ENCODE measurements at regions of chr5 and their contacts with region 1.

Region 1: GRCh38 chr5:39424736-39425637 is at the start of gene DAB2:
- DNase-seq: peak; percentile 87 to 93 (median 90)
- ATAC-seq: peak; percentile 75 to 87 (median 84)
- H3K4me3 ChIP-seq: peak within 1 kb of the TSS; percentile 27 to 76 (median 66)
- H3K27ac ChIP-seq: peak within 1 kb of the TSS; percentile 67 to 91 (median 82)
- H3K4me1 ChIP-seq: peaks cover 0 to 55% (median 43%) of the 10 kb centered on the region in 12 donors
- H3K27me3 ChIP-seq: peaks cover 0 to 5% (median 0%) of the 10 kb centered on the region in 9 donors
- CTCF ChIP-seq: peak; percentile 31 to 81 (median 60)
- POLR2A ChIP-seq: peak in 1 of 2 donors; percentile 66
- total RNA-seq, gene DAB2: 17.6 to 157 (median 26.1) TPM

Region 2: DNA sequence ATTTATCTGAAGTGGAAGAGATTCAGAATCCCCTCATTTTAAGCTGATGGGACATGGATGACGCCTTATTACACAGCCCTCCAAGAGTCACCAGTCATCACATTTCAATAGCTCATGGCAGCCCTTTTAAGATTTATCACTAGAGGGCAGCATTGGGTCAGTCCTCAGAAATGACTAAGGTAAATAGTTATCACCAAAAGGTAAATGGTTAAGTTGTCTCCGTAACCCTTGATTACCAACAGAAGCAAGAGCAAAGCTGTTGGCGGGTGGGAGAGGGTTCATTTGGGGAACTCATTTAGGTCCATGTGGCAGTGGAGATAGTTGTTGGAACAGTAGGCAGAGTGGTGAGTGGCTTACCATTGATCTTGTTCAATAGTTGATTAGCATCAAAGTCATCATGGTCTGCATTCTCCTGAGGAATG is 48.7 kb before region 1 on chr5:
- intact Hi-C with region 1: loop called in 3 of 10 experiments (anchors 5 kb)
- DNase-seq: no peak
- ATAC-seq: peak in 3 of 4 donors; percentile 49 to 79 (median 58)
- H3K4me3 ChIP-seq: no peak overlapping the region
- H3K27ac ChIP-seq: no peak overlapping the region
- H3K4me1 ChIP-seq: peaks cover 0 to 9% (median 0%) of the 10 kb centered on the region in 12 donors
- H3K27me3 ChIP-seq: no peaks in the 10 kb centered on the region
- CTCF ChIP-seq: peak; percentile 60 to 87 (median 73)
- POLR2A ChIP-seq: no peak

Region 3: DNA sequence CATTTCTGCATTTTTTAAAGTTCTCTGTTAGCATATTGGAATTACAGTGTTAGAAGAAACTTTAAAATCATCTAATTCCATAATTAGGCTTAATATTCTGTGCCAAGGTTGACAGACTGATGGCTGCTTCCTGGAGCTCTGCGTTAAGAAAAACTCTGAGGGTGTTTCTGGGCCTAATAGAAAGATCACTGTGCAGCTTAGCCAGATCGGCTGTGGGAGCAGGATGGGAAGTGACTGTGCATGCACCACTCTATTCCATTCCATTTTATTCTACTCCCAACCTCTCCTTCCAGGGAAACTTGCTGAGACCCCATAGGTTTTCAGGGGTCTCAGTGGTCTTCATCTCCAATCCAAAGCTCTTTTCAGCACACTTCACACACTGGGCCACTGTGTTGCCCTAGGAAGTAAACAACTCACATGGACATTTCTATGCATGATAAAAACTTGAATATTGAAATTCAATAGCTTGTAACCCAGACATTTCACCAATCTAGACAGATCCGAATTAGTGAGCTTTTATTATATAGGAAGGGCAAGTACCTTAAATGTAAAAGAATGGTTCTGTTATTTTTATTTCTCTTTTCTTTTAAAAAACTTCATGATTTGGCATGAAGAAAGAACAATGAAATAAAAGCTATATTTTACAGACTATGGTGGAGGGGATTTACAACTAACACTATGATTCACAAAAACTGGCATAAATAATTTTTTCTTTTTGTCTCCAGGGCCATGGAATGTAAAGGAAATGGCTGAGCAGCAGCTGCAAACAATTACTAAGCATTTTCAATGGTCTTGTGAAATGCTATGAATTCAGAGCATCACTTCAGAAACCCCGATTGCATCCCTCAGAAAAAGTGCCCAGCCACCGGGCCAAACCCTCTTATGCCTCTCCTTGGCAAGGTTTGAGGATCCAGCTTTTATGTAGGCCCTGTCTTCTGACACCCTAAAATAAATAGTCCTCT is 51.2 kb after region 1 on chr5:
- intact Hi-C with region 1: no loop called
- DNase-seq: no peak
- ATAC-seq: no peak
- H3K4me3 ChIP-seq: no peak overlapping the region
- H3K27ac ChIP-seq: peak overlapping the region in 2 of 12 donors; percentile 10 to 25
- H3K4me1 ChIP-seq: peaks cover 0 to 24% (median 1%) of the 10 kb centered on the region in 12 donors
- H3K27me3 ChIP-seq: no peaks in the 10 kb centered on the region
- CTCF ChIP-seq: no peak
- POLR2A ChIP-seq: no peak

Region 4: GRCh38 chr5:39501397-39501796 is 76.4 kb after region 1 on chr5:
- intact Hi-C with region 1: loop called in 2 of 10 experiments (anchors 5 to 10 kb)
- DNase-seq: peak in 4 of 5 donors; percentile 48 to 71 (median 59)
- ATAC-seq: peak; percentile 51 to 83 (median 69)
- H3K4me3 ChIP-seq: no peak overlapping the region
- H3K27ac ChIP-seq: peak overlapping the region in 8 of 12 donors; percentile 39 to 66 (median 60)
- H3K4me1 ChIP-seq: peaks cover 0 to 59% (median 16%) of the 10 kb centered on the region in 12 donors
- H3K27me3 ChIP-seq: no peaks in the 10 kb centered on the region
- CTCF ChIP-seq: no peak
- POLR2A ChIP-seq: no peak

Region 5: GRCh38 chr5:39520232-39520572 is 95.2 kb after region 1 on chr5:
- intact Hi-C with region 1: loop called in 4 of 10 experiments (anchors 5 to 10 kb)
- DNase-seq: peak in 1 of 5 donors; percentile 38
- ATAC-seq: peak; percentile 71 to 93 (median 79)
- H3K4me3 ChIP-seq: peak overlapping the region in 6 of 12 donors; percentile 8 to 31 (median 17)
- H3K27ac ChIP-seq: peak overlapping the region; percentile 44 to 89 (median 68)
- H3K4me1 ChIP-seq: peaks cover 0 to 43% (median 12%) of the 10 kb centered on the region in 12 donors
- H3K27me3 ChIP-seq: no peaks in the 10 kb centered on the region
- CTCF ChIP-seq: no peak
- POLR2A ChIP-seq: no peak

Region 6: DNA sequence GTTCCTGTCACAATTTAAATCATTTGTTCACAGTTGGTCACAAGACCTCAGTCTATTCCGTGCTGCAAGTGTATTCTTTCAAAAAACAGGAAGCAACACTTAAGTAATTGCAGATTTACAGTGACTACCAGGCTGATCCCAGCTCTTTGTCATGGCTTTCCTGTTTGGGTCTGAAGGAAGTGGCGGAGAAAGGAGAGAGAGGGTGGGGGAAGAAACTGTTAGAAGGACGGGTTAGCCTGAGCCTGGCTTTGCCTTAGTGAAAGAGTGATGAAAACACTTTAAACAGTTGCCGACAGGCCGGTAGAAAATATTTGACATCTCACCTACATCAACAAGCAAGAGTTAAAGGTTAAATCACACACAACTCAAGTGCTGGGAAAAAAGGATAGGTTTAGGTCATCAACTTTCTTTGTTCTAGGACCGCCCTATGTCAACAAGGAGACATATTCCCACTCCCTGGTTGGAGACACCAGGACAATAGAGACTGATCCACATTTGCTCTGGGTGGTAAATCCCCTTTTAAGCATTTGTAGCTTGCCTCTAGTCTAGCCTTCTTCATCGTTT is 102.0 kb after region 1 on chr5:
- intact Hi-C with region 1: loop called in 4 of 10 experiments (anchors 5 to 10 kb)
- DNase-seq: peak in 2 of 5 donors; percentile 33 to 35
- ATAC-seq: peak; percentile 78 to 95 (median 84)
- H3K4me3 ChIP-seq: no peak overlapping the region
- H3K27ac ChIP-seq: peak overlapping the region in 11 of 12 donors; percentile 36 to 91 (median 66)
- H3K4me1 ChIP-seq: peaks cover 0 to 37% (median 2%) of the 10 kb centered on the region in 12 donors
- H3K27me3 ChIP-seq: no peaks in the 10 kb centered on the region
- CTCF ChIP-seq: no peak
- POLR2A ChIP-seq: no peak

Region 7: DNA sequence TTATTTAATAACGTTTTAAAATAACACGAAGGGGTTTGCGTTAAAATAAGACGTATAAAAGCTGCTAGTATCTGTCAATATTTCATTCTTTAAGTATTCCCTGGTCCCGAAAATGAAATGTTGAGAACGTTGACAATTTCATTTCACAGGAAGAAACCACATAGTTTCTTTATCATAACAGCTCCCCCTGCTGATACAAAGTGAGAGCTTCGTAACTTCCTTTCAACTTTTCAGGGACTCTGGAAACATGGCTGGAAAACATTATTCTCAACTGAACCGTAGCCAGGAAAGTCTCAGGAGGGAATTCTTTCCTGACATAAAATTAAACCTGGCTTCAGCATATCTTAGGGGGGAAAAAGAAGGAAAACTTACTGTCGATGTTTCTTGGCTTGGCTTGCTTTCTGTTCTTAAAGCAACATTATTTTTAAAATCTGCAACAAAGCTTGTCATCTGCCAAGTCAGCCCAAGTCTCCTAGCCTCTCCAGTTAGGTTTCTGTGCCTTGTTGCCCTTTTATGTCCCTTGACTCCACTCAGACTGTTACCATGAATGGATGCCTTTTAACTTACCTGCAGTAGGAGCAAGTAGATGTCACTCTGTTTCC is 122.7 kb after region 1 on chr5:
- intact Hi-C with region 1: loop called in 7 of 10 experiments (anchors 1 to 10 kb)
- DNase-seq: peak in 2 of 5 donors; percentile 62 to 72
- ATAC-seq: peak; percentile 25 to 76 (median 63)
- H3K4me3 ChIP-seq: peak overlapping the region in 2 of 12 donors; percentile 6 to 15
- H3K27ac ChIP-seq: no peak overlapping the region
- H3K4me1 ChIP-seq: peaks cover 0 to 28% (median 7%) of the 10 kb centered on the region in 12 donors
- H3K27me3 ChIP-seq: no peaks in the 10 kb centered on the region
- CTCF ChIP-seq: peak; percentile 61 to 87 (median 74)
- POLR2A ChIP-seq: no peak